ENCODE measurements at regions of chr4 and their contacts with region 1.

Region 1: DNA sequence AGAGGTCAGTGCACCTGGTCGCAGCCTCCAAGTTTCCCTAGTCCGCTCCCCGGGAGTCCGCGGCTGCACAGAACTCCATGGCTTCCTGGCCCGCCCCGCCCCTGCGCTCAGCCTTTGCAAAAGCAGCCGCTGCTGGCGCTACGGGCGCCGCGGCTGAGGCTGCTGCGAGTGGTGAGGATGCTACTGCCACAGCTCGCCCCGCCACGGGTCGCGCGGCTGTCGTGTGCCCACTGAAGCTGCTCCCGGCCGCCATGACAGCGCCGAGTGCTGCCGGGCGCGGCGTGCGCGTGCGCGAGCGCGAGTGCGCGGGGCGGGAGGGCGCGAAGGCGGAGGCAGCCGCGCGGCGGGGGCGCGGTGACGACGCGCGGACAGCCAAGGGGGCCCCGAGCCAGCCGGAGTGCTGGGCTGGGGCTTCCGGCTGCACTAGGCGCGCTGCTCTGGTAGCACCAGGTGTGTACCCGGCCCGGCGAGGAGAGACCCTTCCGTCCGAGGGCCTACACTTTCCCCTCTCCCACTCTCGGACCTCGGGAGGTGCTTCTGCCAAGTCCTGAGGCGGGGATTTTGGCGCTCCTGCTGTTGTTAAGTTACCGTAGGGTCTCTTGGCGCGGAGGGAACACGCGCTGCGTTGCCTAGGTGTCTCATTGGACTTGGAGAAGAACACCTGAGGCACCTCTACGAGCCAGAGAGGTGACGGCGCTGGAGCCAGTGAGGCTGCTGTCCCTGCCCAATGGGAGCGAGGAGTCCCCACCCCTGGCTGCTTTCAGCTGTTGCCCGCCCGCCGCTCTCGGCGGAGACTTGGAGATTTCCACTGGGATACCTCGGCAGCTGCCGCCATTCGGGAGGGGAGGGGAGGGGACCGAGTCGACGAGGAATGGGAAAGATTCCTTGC is 619 bp upstream of the LRBA start:
- DNase-seq: peak; percentile 79
- H3K4me3 Mint-ChIP-seq: peak overlapping the region; percentile 100
- H3K27ac Mint-ChIP-seq: peak overlapping the region; percentile 99
- H3K4me1 Mint-ChIP-seq: peaks cover 34% of the 10 kb centered on the region
- H3K27me3 Mint-ChIP-seq: no peaks in the 10 kb centered on the region

Region 2: GRCh38 chr4:150906987-150907633 is 108.6 kb before region 1 on chr4:
- intact Hi-C with region 1: loop called (anchors 5 kb)
- DNase-seq: no peak
- H3K4me3 Mint-ChIP-seq: no peak overlapping the region
- H3K27ac Mint-ChIP-seq: no peak overlapping the region
- H3K4me1 Mint-ChIP-seq: peaks cover 26% of the 10 kb centered on the region
- H3K27me3 Mint-ChIP-seq: no peaks in the 10 kb centered on the region

Region 3: GRCh38 chr4:150960818-150961217 is 54.9 kb before region 1 on chr4:
- intact Hi-C with region 1: loop called (anchors 2 kb)
- DNase-seq: no peak
- H3K4me3 Mint-ChIP-seq: no peak overlapping the region
- H3K27ac Mint-ChIP-seq: no peak overlapping the region
- H3K4me1 Mint-ChIP-seq: peaks cover 35% of the 10 kb centered on the region
- H3K27me3 Mint-ChIP-seq: no peaks in the 10 kb centered on the region

Region 4: DNA sequence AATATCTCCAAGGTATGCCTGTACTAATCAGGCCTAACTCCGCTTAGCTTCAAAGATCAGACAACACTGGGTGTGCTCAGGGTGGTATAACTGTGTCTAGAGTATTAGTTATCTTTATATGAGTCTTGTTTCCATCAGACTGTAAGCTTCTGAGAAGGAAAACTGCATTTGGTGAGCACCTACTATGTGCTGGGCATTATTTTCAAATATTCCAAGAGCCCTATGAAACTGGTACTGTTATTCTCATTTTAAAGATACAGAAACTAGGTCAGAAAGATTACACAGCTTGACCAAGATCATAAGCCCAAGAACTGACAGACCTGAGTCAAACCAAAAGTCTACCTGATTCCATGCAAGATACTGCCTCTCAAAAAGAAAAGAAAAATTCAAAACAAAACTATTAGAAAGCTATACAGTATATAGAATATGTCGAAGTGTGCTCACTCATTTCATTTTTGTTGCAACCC is 45.0 kb before region 1 on chr4:
- intact Hi-C with region 1: loop called (anchors 2 kb)
- DNase-seq: no peak
- H3K4me3 Mint-ChIP-seq: no peak overlapping the region
- H3K27ac Mint-ChIP-seq: peak overlapping the region; percentile 1
- H3K4me1 Mint-ChIP-seq: peaks cover 45% of the 10 kb centered on the region
- H3K27me3 Mint-ChIP-seq: no peaks in the 10 kb centered on the region

Region 5: GRCh38 chr4:150986085-150986484 is 29.6 kb before region 1 on chr4:
- intact Hi-C with region 1: loop called (anchors 1 kb)
- DNase-seq: no peak
- H3K4me3 Mint-ChIP-seq: no peak overlapping the region
- H3K27ac Mint-ChIP-seq: peak overlapping the region; percentile 80
- H3K4me1 Mint-ChIP-seq: peaks cover 29% of the 10 kb centered on the region
- H3K27me3 Mint-ChIP-seq: no peaks in the 10 kb centered on the region

Region 6: DNA sequence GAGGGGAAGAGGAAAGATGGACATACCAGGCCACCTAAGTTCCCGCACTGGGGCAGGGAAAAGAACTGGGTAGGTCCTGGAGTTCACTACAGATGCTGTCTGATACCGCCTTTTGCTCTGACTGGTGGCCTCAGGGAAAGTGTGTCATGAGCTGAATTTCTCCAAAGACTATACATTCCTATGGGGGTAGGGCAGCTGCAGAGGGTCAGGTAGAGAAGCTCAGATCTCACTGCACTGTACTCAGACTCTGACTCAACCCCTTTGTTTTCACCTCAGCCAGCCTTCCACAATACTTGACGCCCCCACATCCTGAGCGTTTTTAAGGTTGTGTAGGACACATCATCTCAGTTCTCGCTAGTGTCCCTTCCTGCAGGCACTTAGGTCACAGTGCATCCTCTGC is 737.3 kb after region 1 on chr4:
- intact Hi-C with region 1: loop called (anchors 10 kb)
- DNase-seq: no peak
- H3K4me3 Mint-ChIP-seq: no peak overlapping the region
- H3K27ac Mint-ChIP-seq: peak overlapping the region; percentile 18
- H3K4me1 Mint-ChIP-seq: peaks cover 18% of the 10 kb centered on the region
- H3K27me3 Mint-ChIP-seq: no peaks in the 10 kb centered on the region